A549 (cell line): ENCODE measurements at regions of chr12 and their contacts with region 1.

Region 1: GRCh38 chr12:108664338-108665258 is 30.9 kb upstream of the SELPLG start:
- DNase-seq: peak; percentile 82 to 94
- ATAC-seq: peak; percentile 91 to 93
- H3K4me3 ChIP-seq: no peak overlapping the region
- H3K27ac ChIP-seq: peak overlapping the region; percentile 50 to 78
- H3K4me1 ChIP-seq: peaks cover 59% of the 10 kb centered on the region
- CTCF ChIP-seq: peak; percentile 94
- EP300 ChIP-seq: no peak
- POLR2A ChIP-seq: no peak
- RAD21 ChIP-seq: peak; percentile 98 to 99

Region 2: GRCh38 chr12:108394196-108394595 is 270.4 kb before region 1 on chr12:
- CTCF ChIA-PET with region 1: no interaction called
- POLR2A ChIA-PET with region 1: no interaction called
- DNase-seq: no peak
- ATAC-seq: no peak
- H3K4me3 ChIP-seq: no peak overlapping the region
- H3K27ac ChIP-seq: no peak overlapping the region
- H3K4me1 ChIP-seq: no peaks in the 10 kb centered on the region
- CTCF ChIP-seq: no peak
- EP300 ChIP-seq: no peak
- POLR2A ChIP-seq: no peak
- RAD21 ChIP-seq: no peak

Region 3: GRCh38 chr12:108457006-108457733 is 207.4 kb before region 1 on chr12:
- CTCF ChIA-PET with region 1: no interaction called
- POLR2A ChIA-PET with region 1: no interaction called
- DNase-seq: peak; percentile 68 to 71
- ATAC-seq: peak; percentile 77 to 97
- H3K4me3 ChIP-seq: no peak overlapping the region
- H3K27ac ChIP-seq: no peak overlapping the region
- H3K4me1 ChIP-seq: no peaks in the 10 kb centered on the region
- CTCF ChIP-seq: peak; percentile 58
- EP300 ChIP-seq: no peak
- POLR2A ChIP-seq: no peak
- RAD21 ChIP-seq: peak; percentile 56 to 74

Region 4: GRCh38 chr12:108562348-108563135 is 102.1 kb before region 1 on chr12 and contains the start of gene ISCU:
- CTCF ChIA-PET with region 1: interaction called, 10 read pairs
- POLR2A ChIA-PET with region 1: no interaction called
- DNase-seq: peak; percentile 93 to 99
- ATAC-seq: peak; percentile 72 to 87
- H3K4me3 ChIP-seq: peak within 1 kb of the TSS; percentile 82
- H3K27ac ChIP-seq: peak within 1 kb of the TSS; percentile 91 to 95
- H3K4me1 ChIP-seq: peaks cover 37% of the 10 kb centered on the region
- CTCF ChIP-seq: no peak
- EP300 ChIP-seq: no peak
- POLR2A ChIP-seq: peak; percentile 97
- RAD21 ChIP-seq: no peak
- polyA plus RNA-seq, gene ISCU: 174 and 177 TPM in 2 replicates

Region 5: DNA sequence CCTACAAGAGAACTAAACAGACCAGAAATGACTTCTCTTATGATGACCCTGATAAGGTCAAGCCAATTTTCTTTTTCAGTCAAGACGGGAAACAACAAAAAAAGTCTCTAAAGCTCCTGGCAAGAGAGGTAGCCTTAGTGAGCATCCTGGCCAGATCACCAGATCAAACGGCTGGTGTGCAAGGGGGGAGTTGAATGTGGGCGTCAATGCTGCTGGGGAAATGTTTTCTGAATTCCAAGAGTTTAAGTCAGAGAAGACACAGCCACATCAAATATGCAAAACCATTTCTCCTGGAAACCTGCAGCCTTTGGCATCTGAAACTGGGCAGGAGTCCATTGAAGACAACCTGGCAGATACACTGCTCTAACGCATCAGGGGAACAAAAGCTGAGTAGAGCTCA is 14.9 kb before region 1 on chr12:
- CTCF ChIA-PET with region 1: interaction called, 26 read pairs
- POLR2A ChIA-PET with region 1: no interaction called
- DNase-seq: peak in 1 of 2 experiments; percentile 24
- ATAC-seq: peak; percentile 16 to 46; a peak in 3 of 6 replicates
- H3K4me3 ChIP-seq: no peak overlapping the region
- H3K27ac ChIP-seq: peak overlapping the region in 1 of 2 experiments; percentile 32; a peak in 1 of 6 replicates
- H3K4me1 ChIP-seq: peaks cover 29% of the 10 kb centered on the region
- CTCF ChIP-seq: no peak
- EP300 ChIP-seq: no peak
- POLR2A ChIP-seq: no peak
- RAD21 ChIP-seq: no peak

Region 6: GRCh38 chr12:108701779-108702441 is 37.3 kb after region 1 on chr12:
- CTCF ChIA-PET with region 1: interaction called, 14 read pairs
- POLR2A ChIA-PET with region 1: no interaction called
- DNase-seq: no peak
- ATAC-seq: peak; percentile 39 to 47; a peak in 4 of 6 replicates
- H3K4me3 ChIP-seq: no peak overlapping the region
- H3K27ac ChIP-seq: peak overlapping the region in 1 of 2 experiments; percentile 48; a peak in 1 of 6 replicates
- H3K4me1 ChIP-seq: peaks cover 40% of the 10 kb centered on the region
- CTCF ChIP-seq: no peak
- EP300 ChIP-seq: no peak
- POLR2A ChIP-seq: no peak
- RAD21 ChIP-seq: no peak

Region 7: GRCh38 chr12:108753976-108754375 is 89.4 kb after region 1 on chr12:
- CTCF ChIA-PET with region 1: interaction called, 10 read pairs
- POLR2A ChIA-PET with region 1: no interaction called
- DNase-seq: no peak
- ATAC-seq: no peak
- H3K4me3 ChIP-seq: no peak overlapping the region
- H3K27ac ChIP-seq: no peak overlapping the region
- H3K4me1 ChIP-seq: peaks cover 5% of the 10 kb centered on the region; the same call in 1 of the 3 replicates
- CTCF ChIP-seq: no peak
- EP300 ChIP-seq: no peak
- POLR2A ChIP-seq: no peak
- RAD21 ChIP-seq: no peak

Region 8: DNA sequence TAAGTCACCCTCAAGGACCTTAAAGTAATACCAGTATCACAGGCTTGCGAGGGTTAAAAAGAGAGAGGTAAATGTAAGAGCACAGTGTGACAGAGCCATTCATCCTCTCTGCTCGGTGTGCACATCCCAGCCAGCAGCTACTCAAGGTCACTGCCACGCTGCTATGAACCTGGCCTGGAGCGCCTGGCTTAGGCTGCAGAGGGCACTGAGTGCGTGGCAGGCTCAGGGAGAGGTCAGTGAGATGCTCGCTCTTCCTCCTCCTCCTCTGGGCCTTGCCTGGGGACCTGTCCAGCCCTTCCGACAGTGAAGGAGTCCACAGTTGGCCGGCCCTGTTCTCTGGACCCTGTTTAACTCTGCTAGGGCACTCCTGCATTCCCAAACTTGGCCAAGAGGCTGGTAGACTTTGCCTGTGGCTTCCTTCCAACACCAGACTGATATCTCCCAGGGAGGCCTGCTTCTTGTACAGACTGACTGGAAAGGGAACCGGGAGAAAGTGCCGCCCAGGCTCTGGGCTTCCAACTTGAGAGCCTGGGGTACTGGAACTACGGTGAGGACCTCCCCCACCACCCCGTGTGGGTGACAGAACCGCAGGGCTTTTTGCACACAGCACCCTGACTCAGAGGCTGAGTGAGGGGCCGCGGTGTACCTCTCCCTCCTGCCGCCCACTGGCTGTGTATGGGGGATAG is 129.3 kb after region 1 on chr12:
- CTCF ChIA-PET with region 1: interaction called, 313 read pairs
- POLR2A ChIA-PET with region 1: no interaction called
- DNase-seq: no peak
- ATAC-seq: peak; percentile 53 to 70
- H3K4me3 ChIP-seq: no peak overlapping the region
- H3K27ac ChIP-seq: peak overlapping the region in 1 of 2 experiments; percentile 45; a peak in 1 of 6 replicates
- H3K4me1 ChIP-seq: no peaks in the 10 kb centered on the region
- CTCF ChIP-seq: no peak
- EP300 ChIP-seq: no peak
- POLR2A ChIP-seq: no peak
- RAD21 ChIP-seq: no peak

Region 9: DNA sequence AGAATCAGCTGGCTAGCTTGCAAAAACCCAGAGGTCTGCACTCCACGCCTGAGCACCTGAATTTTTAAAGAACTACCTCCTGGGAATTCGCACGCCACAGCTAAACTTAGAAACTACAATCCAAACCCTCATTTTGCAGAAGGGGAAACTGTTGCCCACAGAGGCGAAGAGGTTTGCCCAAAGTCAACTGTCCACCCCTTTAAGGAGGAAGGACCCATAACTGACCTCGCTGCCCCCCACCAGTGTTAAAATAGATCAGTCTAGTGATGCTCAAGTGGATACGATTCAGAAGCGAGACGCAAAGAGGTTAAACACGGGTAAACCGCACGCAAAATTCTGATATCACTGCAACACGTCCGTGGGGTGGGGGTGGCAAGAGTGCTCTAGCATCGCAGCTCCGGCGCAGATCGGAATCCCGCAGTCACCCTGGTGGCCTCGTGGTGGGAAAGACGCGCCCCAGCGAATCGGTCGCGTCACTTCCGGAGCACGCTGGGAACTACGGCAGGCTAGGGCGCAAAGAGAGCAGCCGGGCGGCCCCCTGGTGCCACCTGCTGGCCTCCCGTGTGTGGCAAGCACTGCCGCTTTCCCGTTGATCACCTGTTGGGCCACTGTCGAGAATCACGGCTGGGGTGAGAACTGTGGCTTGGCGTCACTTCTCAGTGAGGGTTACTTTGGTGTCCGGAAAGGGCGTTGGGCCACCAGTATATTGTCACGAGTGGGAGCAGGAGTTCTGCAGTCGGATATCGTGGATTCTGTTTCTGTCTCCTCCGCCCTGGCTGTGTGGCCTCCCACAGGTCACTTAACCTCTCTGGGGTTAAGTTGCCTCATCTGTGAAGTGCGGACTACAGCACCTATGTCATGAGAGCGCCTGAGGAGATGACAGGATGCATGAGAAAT is 428.7 kb after region 1 on chr12 and contains the start of gene ALKBH2:
- CTCF ChIA-PET with region 1: interaction called, 11 read pairs
- POLR2A ChIA-PET with region 1: no interaction called
- DNase-seq: peak; percentile 93 to 95
- ATAC-seq: peak; percentile 68 to 70
- H3K4me3 ChIP-seq: peak within 1 kb of the TSS; percentile 56
- H3K27ac ChIP-seq: peak within 1 kb of the TSS; percentile 77 to 90
- H3K4me1 ChIP-seq: peaks cover 16% of the 10 kb centered on the region; the same call in 1 of the 3 replicates
- CTCF ChIP-seq: peak; percentile 95
- EP300 ChIP-seq: no peak
- POLR2A ChIP-seq: peak; percentile 94
- RAD21 ChIP-seq: peak; percentile 96
- polyA plus RNA-seq, gene ALKBH2: 48.7 and 53.9 TPM in 2 replicates